Posterior vena cava (tissue), 2 donors: ENCODE measurements at regions of chr9 and their contacts with region 1.

Region 1: DNA sequence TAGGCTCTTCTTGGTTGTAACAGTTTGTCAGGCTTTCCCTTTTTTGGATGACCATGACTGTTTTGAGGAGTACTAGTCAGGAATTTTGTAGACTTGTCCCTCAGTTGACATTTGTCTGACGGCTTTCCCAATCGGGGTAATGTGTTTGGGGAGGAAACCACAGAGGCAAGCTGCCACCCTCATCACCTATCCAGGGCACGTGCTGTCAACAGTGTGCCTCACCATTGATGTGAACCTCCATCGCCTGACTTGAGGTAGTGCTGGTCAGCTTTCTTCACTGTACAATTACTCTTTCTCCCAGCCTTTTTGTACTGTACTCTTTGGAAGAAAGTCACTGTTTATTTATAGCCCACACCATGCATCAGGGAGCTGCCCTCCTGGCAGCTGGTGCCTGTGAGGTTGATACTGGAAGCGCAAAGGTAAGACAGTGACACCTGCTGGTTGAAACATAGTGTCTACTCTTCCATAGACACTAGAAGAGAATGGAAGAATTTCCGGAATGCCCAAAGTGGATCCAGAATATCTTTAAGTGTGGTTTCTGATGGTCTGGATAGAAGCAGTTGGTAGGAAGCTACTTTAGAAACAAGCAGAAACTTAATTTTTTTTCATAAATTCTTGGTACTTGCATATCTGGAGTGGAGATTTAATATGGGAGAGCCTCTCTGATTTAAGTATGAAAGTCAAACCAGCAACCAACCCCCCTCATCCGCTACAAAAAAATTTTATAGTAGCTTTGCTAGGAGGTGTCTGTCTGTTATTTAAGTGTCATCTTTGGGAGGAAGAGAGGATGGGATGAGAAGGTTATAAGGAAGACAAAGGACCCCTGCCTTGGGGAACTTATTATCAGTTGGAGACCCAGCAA is 69.3 kb downstream of the SNX30 start:
- DNase-seq: no peak

Region 2: DNA sequence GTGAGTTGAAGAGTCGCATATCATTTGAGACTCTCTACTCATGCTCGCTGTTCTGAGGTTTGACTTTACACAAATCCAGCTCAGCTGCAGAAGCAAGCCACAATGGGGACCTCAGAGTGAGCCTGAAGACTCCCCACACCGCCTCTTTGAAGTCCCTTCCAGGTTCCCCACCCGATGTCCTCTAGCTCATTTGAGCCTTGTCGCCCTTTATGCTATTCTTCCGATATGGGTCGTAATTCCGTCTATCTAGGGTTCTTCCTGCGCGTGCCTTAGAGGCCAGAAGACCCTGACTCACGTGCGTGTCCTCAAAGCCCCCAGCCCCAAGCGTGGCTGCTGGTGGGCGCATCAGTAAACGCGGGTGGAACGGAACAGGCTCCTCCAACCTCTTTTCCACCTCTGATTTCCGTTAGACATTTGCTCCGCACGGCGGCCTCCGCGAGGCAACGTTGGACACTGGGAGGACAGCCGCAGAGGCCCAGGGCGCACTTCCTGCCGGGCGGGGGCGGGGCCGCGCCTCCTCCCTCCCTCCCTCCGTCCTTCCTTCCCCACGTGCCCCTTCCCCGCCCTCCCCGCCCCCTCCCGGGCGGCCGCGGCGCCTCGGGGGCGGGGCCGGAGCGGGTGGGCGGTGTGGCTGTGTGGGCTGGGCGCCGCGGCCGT is 69.6 kb before region 1 on chr9 and contains the start of gene SNX30:
- intact Hi-C with region 1: loop called in 1 of 2 experiments (anchors 10 kb)
- DNase-seq: peak; percentile 96
- total RNA-seq, gene SNX30: 7.8 to 8.6 TPM

Region 3: DNA sequence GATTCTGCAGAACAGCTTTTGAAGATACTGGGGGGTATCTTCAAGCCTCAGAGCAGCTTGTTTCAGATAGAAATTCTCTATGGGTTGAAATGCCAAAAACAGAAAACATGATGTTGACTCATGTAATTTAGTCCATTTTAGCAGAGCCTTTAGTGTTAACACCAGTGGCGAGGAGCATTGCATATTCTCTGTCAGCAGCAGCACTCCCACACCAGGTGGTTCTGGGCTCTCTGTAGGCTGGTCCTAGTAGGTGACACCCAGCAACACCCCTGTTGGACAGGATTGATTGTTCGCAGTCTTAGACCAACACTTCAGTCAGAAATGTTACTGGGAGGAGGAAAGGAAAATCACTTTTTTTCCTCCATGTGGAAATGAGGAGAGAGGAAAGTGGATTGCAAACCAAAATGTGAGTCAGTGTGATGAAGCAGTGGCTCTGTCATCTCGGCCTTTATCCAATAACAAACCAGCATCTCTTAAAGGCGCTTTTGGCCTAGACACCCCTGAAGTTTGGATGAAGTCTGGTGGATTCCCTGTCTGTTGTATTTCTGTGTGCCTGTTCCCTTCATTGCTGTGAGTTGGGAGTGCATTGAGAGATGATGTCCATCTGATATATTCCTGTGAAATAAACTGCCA is 54.0 kb after region 1 on chr9:
- intact Hi-C with region 1: no loop called
- DNase-seq: no peak

Region 4: GRCh38 chr9:113011911-113012381 is 192.1 kb after region 1 on chr9 and contains the start of gene ZNF883:
- intact Hi-C with region 1: no loop called
- DNase-seq: peak; percentile 82
- total RNA-seq, gene ZNF883: 2.1 to 3.2 TPM